CD4-positive, alpha-beta T cell (primary cell): ENCODE measurements at regions of chr3 and their contacts with region 1.

Region 1: DNA sequence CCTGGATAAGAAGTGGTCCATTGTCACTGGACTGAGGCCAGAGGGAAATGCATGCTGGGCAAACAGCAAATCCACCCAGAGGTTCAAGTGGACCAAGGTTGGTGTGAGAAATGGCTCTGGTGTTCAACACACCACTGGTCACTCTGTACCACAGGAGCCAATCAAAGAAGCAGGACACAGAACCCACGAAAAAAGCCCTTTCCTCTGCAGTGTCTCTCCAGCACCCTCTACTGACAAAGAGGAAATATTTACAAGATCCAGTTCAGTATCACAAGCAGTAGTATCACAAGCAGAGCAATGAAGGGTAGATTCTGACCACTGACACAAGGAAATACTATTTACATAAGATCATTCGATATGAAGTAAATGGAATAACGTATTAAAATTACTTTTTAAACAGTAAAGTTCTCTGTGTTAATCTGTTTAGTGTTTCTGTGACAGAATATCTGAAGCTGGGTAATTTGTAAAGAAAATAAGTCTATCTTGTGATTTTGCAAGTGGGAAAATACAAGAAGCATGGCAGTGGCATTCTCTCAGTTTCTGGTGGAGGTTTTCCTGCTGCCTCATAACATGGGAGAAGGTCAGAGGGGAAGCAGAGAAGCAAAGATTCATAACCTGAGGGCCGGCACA is 390.7 kb downstream of the EFHB start:
- DNase-seq: no peak
- ATAC-seq: no peak
- H3K4me3 ChIP-seq: no peak overlapping the region
- H3K4me3 Mint-ChIP-seq: no peak overlapping the region
- H3K27ac ChIP-seq: no peak overlapping the region
- H3K27ac Mint-ChIP-seq: no peak overlapping the region
- H3K4me1 ChIP-seq: no peaks in the 10 kb centered on the region
- H3K4me1 Mint-ChIP-seq: no peaks in the 10 kb centered on the region
- H3K27me3 ChIP-seq: no peaks in the 10 kb centered on the region
- H3K27me3 Mint-ChIP-seq: no peaks in the 10 kb centered on the region
- CTCF ChIP-seq: no peak

Region 2: GRCh38 chr3:19065027-19065426 is 478.3 kb before region 1 on chr3:
- CTCF ChIA-PET with region 1: no interaction called
- POLR2A ChIA-PET with region 1: no interaction called
- intact Hi-C with region 1: loop called in 1 of 2 experiments (anchors 5 kb)
- DNase-seq: peak in 2 of 14 experiments; percentile 11 to 19
- ATAC-seq: no peak
- H3K4me3 ChIP-seq: no peak overlapping the region
- H3K4me3 Mint-ChIP-seq: no peak overlapping the region
- H3K27ac ChIP-seq: no peak overlapping the region
- H3K27ac Mint-ChIP-seq: no peak overlapping the region
- H3K4me1 ChIP-seq: no peaks in the 10 kb centered on the region
- H3K4me1 Mint-ChIP-seq: no peaks in the 10 kb centered on the region
- H3K27me3 ChIP-seq: no peaks in the 10 kb centered on the region
- H3K27me3 Mint-ChIP-seq: no peaks in the 10 kb centered on the region
- CTCF ChIP-seq: peak; percentile 31

Region 3: DNA sequence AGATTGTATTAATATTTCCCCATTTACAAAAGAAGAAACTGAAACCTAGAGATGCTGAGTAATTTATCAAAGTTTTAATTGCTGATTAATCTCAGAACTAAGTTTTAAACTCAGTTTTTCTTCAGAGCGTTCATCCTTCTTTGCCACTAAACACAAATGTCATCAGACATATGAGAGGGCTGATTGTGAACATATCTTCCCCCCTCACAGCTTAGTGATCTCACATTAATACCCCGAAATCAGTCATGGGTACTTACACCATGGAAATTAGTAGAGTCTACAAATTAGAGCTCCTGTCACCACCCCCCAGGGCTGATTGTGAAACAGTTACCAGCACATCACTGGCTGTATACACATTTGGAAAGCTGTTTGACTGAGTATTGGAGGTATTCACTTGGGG is 832.0 kb after region 1 on chr3:
- CTCF ChIA-PET with region 1: no interaction called
- POLR2A ChIA-PET with region 1: no interaction called
- intact Hi-C with region 1: no loop called
- DNase-seq: no peak
- ATAC-seq: no peak
- H3K4me3 ChIP-seq: no peak overlapping the region
- H3K4me3 Mint-ChIP-seq: no peak overlapping the region
- H3K27ac ChIP-seq: no peak overlapping the region
- H3K27ac Mint-ChIP-seq: no peak overlapping the region
- H3K4me1 ChIP-seq: no peaks in the 10 kb centered on the region
- H3K4me1 Mint-ChIP-seq: no peaks in the 10 kb centered on the region
- H3K27me3 ChIP-seq: no peaks in the 10 kb centered on the region
- H3K27me3 Mint-ChIP-seq: no peaks in the 10 kb centered on the region
- CTCF ChIP-seq: no peak